CD8-positive, alpha-beta T cell (primary cell): ENCODE measurements at regions of chr7 and their contacts with region 1.

Region 1: GRCh38 chr7:42283553-42283952 is 46.5 kb upstream of the GLI3 start:
- DNase-seq: no peak
- ATAC-seq: no peak
- H3K4me3 ChIP-seq: no peak overlapping the region
- H3K4me3 Mint-ChIP-seq: no peak overlapping the region
- H3K27ac ChIP-seq: no peak overlapping the region
- H3K27ac Mint-ChIP-seq: no peak overlapping the region
- H3K4me1 ChIP-seq: no peaks in the 10 kb centered on the region
- H3K4me1 Mint-ChIP-seq: no peaks in the 10 kb centered on the region
- H3K27me3 ChIP-seq: no peaks in the 10 kb centered on the region
- H3K27me3 Mint-ChIP-seq: peaks cover 2% of the 10 kb centered on the region
- CTCF ChIP-seq: no peak

Region 2: DNA sequence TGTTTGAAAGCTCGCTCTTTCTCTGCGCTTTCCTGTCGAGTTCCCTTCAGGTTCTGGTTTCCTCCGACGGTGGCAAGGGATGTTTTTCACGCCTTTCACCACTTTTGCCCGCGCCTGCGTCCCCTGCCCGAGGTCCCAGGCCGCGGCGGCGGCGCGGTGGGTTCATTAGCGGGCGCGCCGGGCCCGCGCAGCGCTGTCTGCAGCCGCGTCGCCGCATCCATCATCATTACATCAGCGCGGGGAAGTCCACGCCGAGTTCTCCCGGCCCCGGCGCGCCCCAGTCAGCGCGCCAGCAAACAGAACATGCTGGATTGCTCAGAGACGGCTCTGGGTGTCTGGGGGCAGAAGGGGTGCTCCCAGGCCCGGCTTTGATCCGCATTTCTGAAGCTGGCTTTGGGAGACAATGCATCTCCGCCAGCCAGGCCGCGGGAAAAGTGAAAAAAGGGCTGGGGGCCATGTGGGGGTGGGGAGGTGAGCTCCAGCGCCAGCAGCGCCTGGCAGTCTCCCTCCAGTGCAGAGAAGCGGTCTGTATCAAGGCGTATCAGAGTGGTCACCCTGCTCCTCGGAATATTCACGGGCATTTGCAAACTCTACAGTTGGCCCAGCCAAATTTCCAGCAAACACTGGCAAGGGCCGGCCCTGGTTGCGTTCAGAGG is 55.5 kb before region 1 on chr7:
- CTCF ChIA-PET with region 1: no interaction called
- POLR2A ChIA-PET with region 1: no interaction called
- intact Hi-C with region 1: loop called in 1 of 2 experiments (anchors 10 kb)
- DNase-seq: peak in 2 of 9 experiments; percentile 26 to 40
- ATAC-seq: no peak
- H3K4me3 ChIP-seq: no peak overlapping the region
- H3K4me3 Mint-ChIP-seq: no peak overlapping the region
- H3K27ac ChIP-seq: no peak overlapping the region
- H3K27ac Mint-ChIP-seq: no peak overlapping the region
- H3K4me1 ChIP-seq: no peaks in the 10 kb centered on the region
- H3K4me1 Mint-ChIP-seq: peaks cover 3% of the 10 kb centered on the region
- H3K27me3 ChIP-seq: peaks cover 0 to 9% of the 10 kb centered on the region in 2 experiments
- H3K27me3 Mint-ChIP-seq: peaks cover 51% of the 10 kb centered on the region
- CTCF ChIP-seq: no peak